AG04449 (cell line): ENCODE measurements at regions of chr19 and their contacts with region 1.

Region 1: DNA sequence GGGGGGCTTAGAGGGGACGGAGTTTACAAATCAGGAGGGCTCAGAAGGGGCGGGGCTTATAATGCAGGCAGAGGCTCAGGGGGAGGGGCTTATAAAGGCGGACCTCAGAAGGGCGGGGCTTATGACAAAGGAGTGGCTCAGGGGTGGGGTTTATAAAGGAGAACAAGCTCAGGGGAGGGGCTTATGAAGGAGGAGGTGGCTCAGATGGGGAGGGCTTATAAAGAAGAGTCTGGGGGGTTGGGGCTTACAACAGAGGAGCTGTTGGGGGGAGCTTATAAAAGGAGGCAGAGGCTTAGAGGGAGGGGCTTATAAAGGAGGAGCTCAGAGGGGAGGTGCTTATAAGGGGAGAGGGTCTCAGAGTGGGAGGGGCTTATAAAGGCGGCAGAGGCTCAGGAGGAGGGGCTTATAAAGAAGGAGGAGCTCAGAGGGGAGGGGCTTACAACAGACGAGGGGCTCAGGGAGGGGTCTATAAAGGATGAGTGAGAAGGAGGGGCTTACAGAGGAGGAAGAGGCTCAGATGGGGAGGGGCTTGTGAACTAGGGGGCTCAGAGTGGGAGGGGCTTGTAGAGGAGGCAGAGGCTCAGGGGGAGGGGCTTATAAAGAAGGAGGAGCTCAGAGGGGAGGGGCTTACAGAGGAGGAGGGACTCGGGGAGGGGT is 1.0 kb downstream of the SMIM24 start:
- DNase-seq: no peak
- H3K4me3 ChIP-seq: no peak overlapping the region
- CTCF ChIP-seq: no peak

Region 2: GRCh38 chr19:3324321-3324856 is 154.9 kb before region 1 on chr19:
- CTCF ChIA-PET with region 1: interaction called, 117 read pairs
- POLR2A ChIA-PET with region 1: no interaction called
- DNase-seq: no peak
- H3K4me3 ChIP-seq: no peak overlapping the region
- CTCF ChIP-seq: peak; percentile 78

Region 3: GRCh38 chr19:3397266-3398022 is 81.9 kb before region 1 on chr19:
- CTCF ChIA-PET with region 1: no interaction called
- POLR2A ChIA-PET with region 1: no interaction called
- DNase-seq: no peak
- H3K4me3 ChIP-seq: no peak overlapping the region
- CTCF ChIP-seq: no peak

Region 4: DNA sequence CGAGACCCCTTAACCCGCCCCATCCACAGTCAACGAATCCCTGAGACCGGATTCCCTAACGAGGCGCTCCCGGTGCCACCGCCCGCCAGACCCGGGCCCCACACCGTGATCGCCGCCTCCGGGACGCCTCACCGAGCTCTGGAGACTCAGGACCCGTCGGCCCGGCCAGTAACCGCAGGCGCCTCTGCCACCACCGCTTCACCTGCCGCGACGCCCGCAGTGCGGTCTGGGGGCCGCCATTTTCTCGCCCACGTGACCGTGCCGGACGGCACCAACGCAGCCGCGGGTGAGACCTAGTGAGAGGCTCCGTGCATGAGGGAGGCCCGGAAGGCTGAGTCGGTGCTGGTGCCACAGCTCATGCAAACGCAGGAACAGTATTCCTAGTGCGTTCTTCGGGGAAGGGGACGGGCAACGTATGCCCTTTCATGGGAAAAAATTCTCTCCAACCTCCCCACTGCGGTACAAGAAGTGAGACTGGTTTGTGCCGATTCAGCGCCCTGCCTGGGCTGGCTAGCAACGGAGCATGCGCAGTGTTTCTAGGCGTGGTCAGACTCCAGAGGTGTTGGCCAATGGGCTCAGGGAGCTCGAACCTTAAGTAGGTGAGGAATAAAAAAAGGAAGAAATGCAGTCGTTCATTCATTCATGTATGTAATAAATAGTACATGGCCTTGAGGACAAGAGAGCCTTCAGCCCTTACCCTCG is 21.3 kb after region 1 on chr19 and contains the start of gene DOHH:
- CTCF ChIA-PET with region 1: interaction called, 10 read pairs
- POLR2A ChIA-PET with region 1: no interaction called
- DNase-seq: peak; percentile 78
- H3K4me3 ChIP-seq: peak within 1 kb of the TSS; percentile 90
- CTCF ChIP-seq: no peak